A673 (cell line): ENCODE measurements at regions of chr18 and their contacts with region 1.

Region 1: DNA sequence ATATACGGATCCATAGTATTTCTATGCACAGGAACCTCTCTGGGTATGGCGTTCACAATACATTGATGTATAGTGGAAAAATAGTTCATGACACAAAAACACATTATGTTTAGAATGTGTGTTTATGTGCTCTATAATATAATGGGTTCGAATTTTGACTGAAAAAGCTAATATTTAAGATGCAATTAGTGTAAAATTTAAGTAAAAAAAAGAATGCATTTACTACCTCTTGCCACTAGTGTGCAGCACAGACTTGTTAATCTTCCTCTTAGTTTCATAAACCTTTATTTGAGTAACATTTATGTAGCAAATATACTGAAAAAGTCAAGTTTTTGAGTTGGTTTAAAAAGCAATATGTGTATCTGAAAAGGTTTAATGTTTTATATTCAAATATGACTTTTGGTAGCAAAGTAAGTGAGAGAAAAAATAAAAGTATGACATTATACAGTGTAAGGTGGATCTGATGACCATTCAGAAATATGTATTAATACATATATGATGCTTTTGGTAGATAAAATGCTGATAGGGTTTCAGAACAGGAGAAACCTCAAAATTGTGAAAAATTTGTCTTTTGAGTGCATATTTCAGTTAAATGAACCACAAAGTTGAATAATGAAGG is 49.4 kb downstream of the CCDC102B start:
- DNase-seq: peak; percentile 49
- H3K4me3 ChIP-seq: no peak overlapping the region
- H3K27ac ChIP-seq: no peak overlapping the region
- H3K4me1 ChIP-seq: peaks cover 27% of the 10 kb centered on the region
- H3K27me3 ChIP-seq: no peaks in the 10 kb centered on the region
- CTCF ChIP-seq: peak; percentile 75

Region 2: GRCh38 chr18:67217551-67218166 is 1629.7 kb before region 1 on chr18:
- CTCF ChIA-PET with region 1: no interaction called
- POLR2A ChIA-PET with region 1: no interaction called
- intact Hi-C with region 1: loop called (anchors 10 kb)
- DNase-seq: peak; percentile 77
- H3K4me3 ChIP-seq: no peak overlapping the region
- H3K27ac ChIP-seq: no peak overlapping the region
- H3K4me1 ChIP-seq: peaks cover 16% of the 10 kb centered on the region
- H3K27me3 ChIP-seq: no peaks in the 10 kb centered on the region
- CTCF ChIP-seq: peak; percentile 73

Region 3: DNA sequence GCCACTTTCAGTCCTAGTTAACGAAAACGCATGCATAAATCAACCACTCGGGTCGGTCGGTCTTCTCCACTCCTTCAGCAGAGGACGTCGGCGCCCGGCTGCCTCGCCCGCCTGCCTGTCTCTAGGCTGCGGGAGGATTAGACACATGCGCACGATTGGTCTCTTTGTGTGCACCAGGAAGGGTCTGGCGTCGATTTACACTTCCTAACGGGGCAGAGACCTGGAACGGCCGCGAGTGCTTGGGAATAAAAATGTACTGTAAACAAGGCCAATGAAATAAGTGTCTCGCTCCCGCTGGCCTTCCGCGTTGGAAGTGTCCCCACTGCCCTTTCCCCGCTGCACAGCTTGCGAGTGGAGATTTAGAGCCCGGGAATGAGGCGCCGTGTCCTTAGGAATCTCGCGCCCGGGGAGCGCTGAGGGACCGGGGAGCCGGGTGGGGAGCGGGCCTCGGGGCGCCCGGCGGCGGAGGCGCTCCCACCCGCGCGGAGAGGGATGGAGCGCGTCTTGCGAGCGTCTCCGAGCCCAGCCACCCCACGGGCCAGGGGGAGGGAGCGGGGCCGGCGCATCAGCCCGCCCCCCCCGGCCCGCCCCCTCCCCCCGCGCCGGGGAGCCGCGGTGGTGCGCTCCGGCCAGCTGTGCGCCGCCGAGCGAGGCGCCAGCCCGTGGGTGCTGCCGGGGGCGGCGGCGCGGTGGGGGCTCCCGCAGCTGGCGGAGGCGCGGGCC is 553.1 kb after region 1 on chr18 and contains the start of gene DOK6:
- CTCF ChIA-PET with region 1: no interaction called
- POLR2A ChIA-PET with region 1: no interaction called
- intact Hi-C with region 1: loop called (anchors 10 kb)
- DNase-seq: peak; percentile 93
- H3K4me3 ChIP-seq: peak within 1 kb of the TSS; percentile 62
- H3K27ac ChIP-seq: peak within 1 kb of the TSS; percentile 66
- H3K4me1 ChIP-seq: no peaks in the 10 kb centered on the region
- H3K27me3 ChIP-seq: no peaks in the 10 kb centered on the region
- CTCF ChIP-seq: no peak
- total RNA-seq, gene DOK6: 13.7 and 17.0 TPM in 2 replicates

Region 4: DNA sequence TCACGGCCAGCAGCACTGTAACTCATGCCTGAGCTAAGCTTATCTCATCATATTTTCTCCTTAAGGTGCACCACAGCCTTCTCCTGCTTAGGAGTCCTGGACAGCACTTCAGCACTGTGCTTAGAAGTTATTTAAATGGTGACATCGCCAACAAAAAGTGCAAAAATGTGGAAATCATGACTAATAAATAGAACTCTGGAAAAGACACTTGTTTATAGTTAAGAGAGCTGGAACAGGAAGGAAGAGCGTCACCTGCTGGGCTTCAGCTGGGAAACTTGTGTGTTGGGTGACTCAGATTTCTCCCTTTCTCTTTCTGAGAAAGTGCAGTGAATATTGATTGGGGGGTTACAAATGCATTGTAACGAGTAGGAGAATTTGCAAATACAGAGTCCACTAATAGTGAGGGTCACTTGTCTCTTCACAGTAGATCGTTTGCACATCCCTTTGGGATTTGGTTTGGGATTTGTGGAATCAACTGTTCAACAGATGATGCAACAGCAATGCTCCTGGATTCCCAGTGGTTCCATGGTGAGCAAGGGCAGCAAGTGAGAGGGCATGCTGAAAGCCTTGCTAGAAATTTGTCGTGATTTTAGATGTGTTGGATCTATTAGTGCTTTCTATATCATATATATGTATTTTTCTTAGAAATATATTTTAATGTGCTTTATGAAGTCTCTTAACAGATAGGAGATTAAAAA is 637.5 kb after region 1 on chr18:
- CTCF ChIA-PET with region 1: no interaction called
- POLR2A ChIA-PET with region 1: no interaction called
- intact Hi-C with region 1: loop called (anchors 10 kb)
- DNase-seq: peak; percentile 79
- H3K4me3 ChIP-seq: no peak overlapping the region
- H3K27ac ChIP-seq: peak overlapping the region; percentile 14
- H3K4me1 ChIP-seq: peaks cover 11% of the 10 kb centered on the region
- H3K27me3 ChIP-seq: no peaks in the 10 kb centered on the region
- CTCF ChIP-seq: peak; percentile 75

Region 5: DNA sequence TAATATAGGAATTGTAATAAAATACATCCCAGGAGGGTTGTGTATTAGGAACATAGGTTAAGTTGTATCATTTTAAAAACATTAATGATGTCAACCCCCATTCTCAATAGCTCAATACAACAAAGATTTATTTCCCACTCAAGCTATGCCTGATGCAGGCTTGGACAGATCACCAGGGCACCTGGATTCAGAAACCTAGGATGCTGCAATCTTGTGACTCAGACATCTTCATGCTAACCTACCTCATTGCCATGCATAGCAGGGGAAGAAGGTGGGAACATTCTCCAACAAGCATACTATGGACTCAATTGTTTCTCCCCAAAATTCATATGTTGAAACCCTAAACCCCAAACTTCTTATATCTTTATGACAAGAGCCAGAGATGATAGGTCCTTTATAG is 856.1 kb after region 1 on chr18:
- CTCF ChIA-PET with region 1: no interaction called
- POLR2A ChIA-PET with region 1: no interaction called
- intact Hi-C with region 1: no loop called
- DNase-seq: no peak
- H3K4me3 ChIP-seq: no peak overlapping the region
- H3K27ac ChIP-seq: no peak overlapping the region
- H3K4me1 ChIP-seq: no peaks in the 10 kb centered on the region
- H3K27me3 ChIP-seq: no peaks in the 10 kb centered on the region
- CTCF ChIP-seq: no peak

Region 6: GRCh38 chr18:70082430-70082829 is 1235.1 kb after region 1 on chr18:
- CTCF ChIA-PET with region 1: no interaction called
- POLR2A ChIA-PET with region 1: no interaction called
- intact Hi-C with region 1: loop called (anchors 2 kb)
- DNase-seq: no peak
- H3K4me3 ChIP-seq: no peak overlapping the region
- H3K27ac ChIP-seq: no peak overlapping the region
- H3K4me1 ChIP-seq: no peaks in the 10 kb centered on the region
- H3K27me3 ChIP-seq: no peaks in the 10 kb centered on the region
- CTCF ChIP-seq: no peak

Region 7: DNA sequence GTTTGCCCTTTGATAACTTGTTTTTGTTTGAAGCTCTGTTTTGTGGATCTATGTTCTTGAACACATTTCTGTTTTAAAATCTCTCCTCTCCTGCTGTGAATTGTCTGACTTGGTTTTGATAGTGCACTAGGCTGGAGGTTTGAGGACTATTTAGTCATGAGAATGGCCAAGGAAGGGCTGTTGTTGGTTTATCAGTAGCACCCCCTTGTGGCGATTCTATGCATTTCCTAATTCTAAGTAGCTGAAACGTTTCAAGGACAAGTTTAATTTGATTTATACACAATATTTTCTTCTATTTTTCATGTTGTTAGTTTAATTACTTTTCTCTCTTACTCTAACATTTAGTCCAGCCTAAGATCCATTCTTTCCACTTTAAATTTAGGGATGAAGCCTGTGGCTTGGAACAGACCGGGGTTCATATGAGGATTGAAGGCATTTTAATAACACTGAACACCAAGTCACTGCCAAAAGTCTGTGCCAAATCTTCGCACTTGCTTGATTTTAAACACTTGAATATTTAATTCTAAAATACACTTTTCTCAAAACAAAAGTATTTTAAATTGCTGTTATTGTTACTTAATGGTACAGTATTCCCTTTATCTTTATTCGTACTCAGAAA is 1607.5 kb after region 1 on chr18:
- CTCF ChIA-PET with region 1: no interaction called
- POLR2A ChIA-PET with region 1: no interaction called
- intact Hi-C with region 1: loop called (anchors 10 kb)
- DNase-seq: peak; percentile 77
- H3K4me3 ChIP-seq: no peak overlapping the region
- H3K27ac ChIP-seq: no peak overlapping the region
- H3K4me1 ChIP-seq: no peaks in the 10 kb centered on the region
- H3K27me3 ChIP-seq: no peaks in the 10 kb centered on the region
- CTCF ChIP-seq: peak; percentile 88